Posterior cingulate gyrus (tissue), 11 donors: ENCODE measurements at regions of chr1 and their contacts with region 1.

Region 1: GRCh38 chr1:61641578-61642336 is 83.2 kb downstream of the TM2D1 start:
- DNase-seq: peak; percentile 67 to 96 (median 78)

Region 2: DNA sequence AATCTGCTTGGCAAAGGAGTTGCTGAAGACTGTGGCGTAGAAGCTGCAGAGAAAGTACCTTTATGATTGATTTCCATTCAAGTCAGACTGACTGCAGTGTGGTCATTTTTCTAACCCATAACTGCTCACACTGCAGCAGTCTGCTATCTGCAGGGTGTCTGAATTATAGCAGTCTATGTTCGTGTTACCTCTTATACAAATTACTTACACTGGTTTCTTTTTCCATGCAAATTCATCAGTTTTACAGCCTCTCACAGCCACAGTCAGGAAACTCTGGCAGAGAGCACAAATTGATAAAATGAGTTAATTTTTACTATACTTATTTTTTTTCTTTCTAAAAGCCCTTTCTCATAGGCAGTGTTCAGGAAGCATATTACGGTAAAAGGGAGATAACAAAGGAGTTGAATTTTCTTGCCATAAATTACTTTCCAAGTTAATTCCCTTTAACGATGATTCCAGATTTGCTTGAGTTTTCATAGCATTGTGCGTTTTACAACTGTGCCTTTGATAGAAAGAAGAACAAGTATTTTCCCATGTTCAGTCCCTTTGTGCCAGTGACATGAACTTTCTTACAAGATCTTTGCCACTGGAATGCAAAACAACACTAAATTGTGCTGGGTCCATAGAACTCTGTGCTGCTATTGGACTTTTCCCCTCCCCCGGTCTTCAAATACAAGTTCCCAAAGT is 297.9 kb before region 1 on chr1:
- intact Hi-C with region 1: loop called (anchors 10 kb)
- DNase-seq: no peak

Region 3: GRCh38 chr1:61453111-61453961 is 188.4 kb before region 1 on chr1:
- intact Hi-C with region 1: loop called (anchors 10 kb)
- DNase-seq: peak; percentile 68 to 96 (median 82)

Region 4: DNA sequence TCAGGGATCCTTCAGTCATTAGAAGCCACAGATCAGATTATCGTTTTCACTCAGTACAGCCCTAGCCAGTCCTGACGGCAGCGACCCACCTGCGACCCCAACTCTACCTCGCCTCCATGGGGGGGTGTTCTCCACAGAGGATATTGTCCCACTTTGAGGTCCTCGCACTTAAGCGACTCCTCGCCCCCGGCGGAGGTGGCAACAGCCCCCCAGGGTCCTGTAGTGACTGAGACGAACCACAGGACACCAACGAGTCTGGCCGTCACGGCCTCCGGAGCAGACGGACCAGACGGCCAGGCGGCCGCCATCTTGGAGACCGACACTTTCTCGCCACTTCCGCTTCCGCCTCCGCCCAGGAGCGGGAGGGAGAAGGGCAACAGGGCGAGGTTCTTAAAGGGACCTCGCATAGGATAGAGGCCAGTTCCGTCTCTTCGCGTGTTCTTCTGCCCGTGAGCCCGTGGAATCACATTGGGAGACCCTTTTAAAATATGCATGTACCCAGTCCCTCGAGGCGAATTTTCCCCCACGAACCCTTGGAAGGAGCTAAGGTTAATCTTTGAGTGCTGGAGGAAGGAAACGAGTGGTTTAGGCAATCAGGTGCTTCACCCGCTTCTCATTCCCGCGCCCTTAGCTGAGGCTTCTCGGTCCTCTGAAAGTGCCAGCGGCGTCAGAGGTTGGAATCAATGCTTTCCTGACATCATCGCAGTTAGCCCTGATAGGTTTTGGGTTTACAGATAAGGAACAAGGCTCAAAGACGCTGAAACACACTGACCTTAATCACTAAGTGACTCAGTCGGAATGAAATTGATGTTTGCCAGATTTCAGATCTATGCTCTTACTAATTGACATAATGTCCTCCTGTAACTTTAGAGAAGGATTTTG is 83.3 kb after region 1 on chr1 and contains the start of gene TM2D1:
- intact Hi-C with region 1: loop called (anchors 10 kb)
- DNase-seq: peak; percentile 86 to 99 (median 91)